Gastrocnemius medialis (tissue), 4 donors: ENCODE measurements at regions of chr1 and their contacts with region 1.

Region 1: GRCh38 chr1:78145105-78145580 is 99.4 kb downstream of the GIPC2 start:
- DNase-seq: peak; percentile 6 to 34
- ATAC-seq: peak; percentile 70 to 86
- H3K4me3 ChIP-seq: no peak overlapping the region
- H3K27ac ChIP-seq: no peak overlapping the region
- H3K4me1 ChIP-seq: no peaks in the 10 kb centered on the region
- H3K27me3 ChIP-seq: no peaks in the 10 kb centered on the region
- CTCF ChIP-seq: peak; percentile 46 to 84 (median 63)
- POLR2A ChIP-seq: no peak

Region 2: DNA sequence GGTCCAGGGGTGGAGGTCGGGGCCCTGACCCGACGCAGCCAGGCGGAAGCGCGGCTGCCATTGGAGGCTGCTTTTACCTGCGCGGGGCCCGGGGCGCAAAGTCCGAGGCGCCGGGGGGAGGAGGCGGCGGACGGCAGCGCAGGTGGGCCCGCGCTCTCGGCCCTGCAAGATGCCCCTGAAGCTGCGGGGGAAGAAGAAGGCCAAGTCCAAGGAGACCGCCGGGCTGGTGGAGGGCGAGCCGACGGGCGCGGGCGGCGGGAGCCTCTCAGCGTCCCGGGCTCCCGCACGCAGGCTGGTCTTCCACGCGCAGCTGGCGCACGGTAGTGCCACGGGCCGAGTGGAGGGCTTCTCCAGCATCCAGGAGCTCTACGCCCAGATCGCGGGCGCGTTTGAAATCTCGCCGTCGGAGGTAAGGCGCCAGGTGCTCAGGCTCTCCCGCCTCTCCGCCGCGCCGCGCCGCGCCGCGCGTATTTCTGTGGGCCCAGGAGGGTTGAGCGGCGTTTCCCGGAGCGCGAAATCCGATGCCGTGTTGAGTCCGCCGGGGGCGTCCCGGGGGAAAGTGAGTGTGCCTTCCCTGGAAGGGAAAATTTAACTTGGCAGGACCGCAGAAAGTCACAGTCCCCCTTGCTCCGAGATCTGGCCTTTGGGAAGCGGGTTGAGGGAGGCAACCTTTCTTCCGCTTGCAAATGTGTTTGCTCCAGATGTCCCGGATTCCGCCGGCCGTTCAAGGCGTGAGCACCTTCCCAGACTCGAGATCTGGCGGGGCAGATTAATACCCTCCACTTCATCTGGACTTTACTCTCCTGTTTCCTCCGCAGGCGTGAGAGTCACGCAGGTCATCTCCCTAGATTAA is 99.0 kb before region 1 on chr1 and contains the start of gene GIPC2:
- in situ Hi-C with region 1: no loop called
- intact Hi-C with region 1: no loop called
- DNase-seq: peak in 1 of 2 donors; percentile 23
- ATAC-seq: peak; percentile 51 to 75
- H3K4me3 ChIP-seq: peak within 1 kb of the TSS; percentile 66 to 87 (median 76)
- H3K27ac ChIP-seq: peak within 1 kb of the TSS; percentile 70 to 84 (median 78)
- H3K4me1 ChIP-seq: peaks cover 17 to 34% of the 10 kb centered on the region in 2 donors
- H3K27me3 ChIP-seq: no peaks in the 10 kb centered on the region
- CTCF ChIP-seq: no peak
- POLR2A ChIP-seq: peak in 1 of 2 donors; percentile 5
- total RNA-seq, gene GIPC2: 0.67 to 1.5 (median 1.3) TPM

Region 3: GRCh38 chr1:78607334-78607927 is 462.3 kb after region 1 on chr1:
- in situ Hi-C with region 1: no loop called
- intact Hi-C with region 1: loop called (anchors 1 kb)
- DNase-seq: no peak
- ATAC-seq: no peak
- H3K4me3 ChIP-seq: no peak overlapping the region
- H3K27ac ChIP-seq: no peak overlapping the region
- H3K4me1 ChIP-seq: no peaks in the 10 kb centered on the region
- H3K27me3 ChIP-seq: no peaks in the 10 kb centered on the region
- CTCF ChIP-seq: peak in 4 of 5 experiments; percentile 19 to 48 (median 31)
- POLR2A ChIP-seq: no peak

Region 4: DNA sequence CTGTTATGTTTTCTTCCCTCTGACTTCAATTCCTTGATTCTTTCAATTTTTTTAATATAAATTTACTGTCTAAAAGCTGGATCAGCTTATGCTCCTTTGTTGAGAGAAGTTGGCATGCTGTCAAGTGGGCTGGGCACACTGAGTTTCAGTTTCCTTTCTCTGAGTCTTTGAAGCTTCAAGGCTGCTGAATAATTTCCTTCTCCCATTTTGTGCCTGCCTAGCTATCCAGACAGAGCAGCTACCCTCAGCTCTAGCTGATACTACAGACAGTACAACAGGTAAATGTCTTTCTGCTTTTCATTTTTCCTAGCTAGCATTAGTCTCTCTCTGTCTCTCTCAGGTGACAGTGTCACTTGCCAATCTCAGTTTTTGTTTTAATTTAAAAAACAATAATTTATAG is 504.5 kb after region 1 on chr1 and contains the start of gene IFI44:
- in situ Hi-C with region 1: loop called in 1 of 4 experiments (anchors 25 kb)
- intact Hi-C with region 1: no loop called
- DNase-seq: peak; percentile 51 to 69
- ATAC-seq: peak; percentile 86 to 88
- H3K4me3 ChIP-seq: peak within 1 kb of the TSS; percentile 41 to 50 (median 46)
- H3K27ac ChIP-seq: peak within 1 kb of the TSS; percentile 56 to 67 (median 58)
- H3K4me1 ChIP-seq: peaks cover 0 to 3% of the 10 kb centered on the region in 2 donors
- H3K27me3 ChIP-seq: no peaks in the 10 kb centered on the region
- CTCF ChIP-seq: no peak
- POLR2A ChIP-seq: peak; percentile 24 to 60
- total RNA-seq, gene IFI44: 2.6 to 3.1 (median 2.8) TPM

Region 5: GRCh38 chr1:78676347-78676982 is 531.3 kb after region 1 on chr1:
- in situ Hi-C with region 1: loop called in 3 of 4 experiments (anchors 5 to 25 kb)
- intact Hi-C with region 1: loop called (anchors 2 kb)
- DNase-seq: peak in 1 of 2 donors; percentile 15
- ATAC-seq: no peak
- H3K4me3 ChIP-seq: no peak overlapping the region
- H3K27ac ChIP-seq: no peak overlapping the region
- H3K4me1 ChIP-seq: no peaks in the 10 kb centered on the region
- H3K27me3 ChIP-seq: no peaks in the 10 kb centered on the region
- CTCF ChIP-seq: peak; percentile 63 to 87 (median 82)
- POLR2A ChIP-seq: no peak